Caco-2 (cell line): ENCODE measurements at regions of chr11 and their contacts with region 1.

Region 1: DNA sequence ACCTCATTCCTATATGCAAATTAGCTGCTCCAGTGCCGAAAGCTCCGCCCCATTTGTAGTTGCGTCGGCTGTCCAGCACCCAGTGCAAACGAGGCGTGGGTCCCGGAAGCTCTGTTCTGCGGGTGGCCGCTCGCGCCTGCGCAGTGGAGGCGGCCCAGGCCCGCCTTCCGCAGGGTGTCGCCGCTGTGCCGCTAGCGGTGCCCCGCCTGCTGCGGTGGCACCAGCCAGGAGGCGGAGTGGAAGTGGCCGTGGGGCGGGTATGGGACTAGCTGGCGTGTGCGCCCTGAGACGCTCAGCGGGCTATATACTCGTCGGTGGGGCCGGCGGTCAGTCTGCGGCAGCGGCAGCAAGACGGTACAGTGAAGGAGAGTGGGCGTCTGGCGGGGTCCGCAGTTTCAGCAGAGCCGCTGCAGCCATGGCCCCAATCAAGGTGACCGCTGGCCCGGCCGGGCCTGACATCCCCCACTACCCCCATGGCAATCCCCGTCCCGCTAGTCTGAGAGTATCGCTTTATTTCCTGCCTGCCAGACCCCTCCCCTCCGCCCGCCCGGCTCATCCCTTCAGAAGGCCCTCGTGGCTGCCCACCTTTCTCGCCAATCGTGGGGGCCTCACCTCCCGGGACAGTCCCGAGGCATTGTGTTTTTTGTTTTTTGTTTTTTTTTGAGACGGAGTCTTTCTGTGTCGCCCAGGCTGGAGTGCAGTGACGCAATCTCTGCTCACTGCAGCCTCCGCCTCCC is at the start of gene PRDX5:
- DNase-seq: peak; percentile 98
- H3K4me3 ChIP-seq: peak within 1 kb of the TSS; percentile 70
- H3K4me3 Mint-ChIP-seq: peak within 1 kb of the TSS; percentile 84
- H3K27ac Mint-ChIP-seq: peak within 1 kb of the TSS; percentile 97
- H3K4me1 ChIP-seq: peaks cover 21% of the 10 kb centered on the region
- H3K4me1 Mint-ChIP-seq: peaks cover 28% of the 10 kb centered on the region
- H3K27me3 ChIP-seq: no peaks in the 10 kb centered on the region
- H3K27me3 Mint-ChIP-seq: no peaks in the 10 kb centered on the region
- CTCF ChIP-seq: peak in 1 of 2 experiments; percentile 56
- total RNA-seq, gene PRDX5: 269 and 306 TPM in 2 replicates

Region 2: GRCh38 chr11:64269380-64270234 is 48.5 kb before region 1 on chr11:
- CTCF ChIA-PET with region 1: interaction called, 34 read pairs
- POLR2A ChIA-PET with region 1: interaction called, 9 read pairs
- intact Hi-C with region 1: no loop called
- DNase-seq: peak; percentile 99
- H3K4me3 ChIP-seq: peak overlapping the region; percentile 85
- H3K4me3 Mint-ChIP-seq: peak overlapping the region; percentile 89
- H3K27ac Mint-ChIP-seq: peak overlapping the region; percentile 95
- H3K4me1 ChIP-seq: peaks cover 21% of the 10 kb centered on the region
- H3K4me1 Mint-ChIP-seq: peaks cover 17% of the 10 kb centered on the region
- H3K27me3 ChIP-seq: no peaks in the 10 kb centered on the region
- H3K27me3 Mint-ChIP-seq: no peaks in the 10 kb centered on the region
- CTCF ChIP-seq: no peak

Region 3: DNA sequence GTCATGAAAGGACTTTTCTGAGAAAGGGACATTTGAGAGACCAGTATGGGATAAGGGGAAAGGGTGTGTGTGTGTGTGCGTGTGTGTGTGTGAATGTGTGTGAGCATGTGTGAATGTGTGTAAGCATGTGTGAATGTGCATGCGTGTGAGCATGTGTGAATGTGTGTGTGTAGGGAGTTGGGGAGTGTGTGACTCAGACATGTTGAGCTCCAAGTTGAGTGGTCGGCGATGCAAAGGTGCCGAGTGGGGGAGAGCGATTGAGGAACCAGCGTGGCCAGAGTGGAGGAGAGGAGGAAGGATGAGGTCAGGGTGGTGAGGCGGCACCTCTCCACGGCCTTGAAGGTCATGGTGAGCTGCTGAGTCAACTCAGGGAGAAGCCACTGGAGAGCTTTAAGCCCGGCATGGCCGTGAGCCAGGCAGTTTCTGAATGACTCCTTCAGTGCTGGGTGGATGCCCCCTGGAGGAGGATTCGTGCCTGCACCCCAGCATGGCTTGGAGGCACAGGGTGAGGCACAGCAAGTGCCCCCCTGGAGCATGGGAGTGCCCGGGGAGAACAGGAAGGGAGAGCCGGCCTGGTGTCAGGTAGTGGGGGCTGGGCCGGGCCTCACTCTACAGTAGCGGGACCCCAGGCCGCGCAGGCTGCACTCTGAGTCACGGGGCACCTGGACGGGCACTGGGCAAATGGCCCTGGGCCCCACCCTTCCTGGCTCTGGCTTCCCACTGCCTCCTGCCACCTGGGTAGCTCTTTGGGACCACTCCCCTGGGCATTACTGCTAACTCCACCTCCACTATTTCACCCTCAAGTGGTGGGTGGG is 13.6 kb after region 1 on chr11:
- CTCF ChIA-PET with region 1: interaction called, 24 read pairs
- POLR2A ChIA-PET with region 1: interaction called, 13 read pairs
- intact Hi-C with region 1: loop called (anchors 1 kb)
- DNase-seq: peak; percentile 42 to 55
- H3K4me3 ChIP-seq: no peak overlapping the region
- H3K4me3 Mint-ChIP-seq: no peak overlapping the region
- H3K27ac Mint-ChIP-seq: no peak overlapping the region
- H3K4me1 ChIP-seq: peaks cover 5% of the 10 kb centered on the region; the same call in 1 of the 2 replicates
- H3K4me1 Mint-ChIP-seq: peaks cover 12% of the 10 kb centered on the region
- H3K27me3 ChIP-seq: no peaks in the 10 kb centered on the region
- H3K27me3 Mint-ChIP-seq: no peaks in the 10 kb centered on the region
- CTCF ChIP-seq: peak; percentile 17 to 20

Region 4: DNA sequence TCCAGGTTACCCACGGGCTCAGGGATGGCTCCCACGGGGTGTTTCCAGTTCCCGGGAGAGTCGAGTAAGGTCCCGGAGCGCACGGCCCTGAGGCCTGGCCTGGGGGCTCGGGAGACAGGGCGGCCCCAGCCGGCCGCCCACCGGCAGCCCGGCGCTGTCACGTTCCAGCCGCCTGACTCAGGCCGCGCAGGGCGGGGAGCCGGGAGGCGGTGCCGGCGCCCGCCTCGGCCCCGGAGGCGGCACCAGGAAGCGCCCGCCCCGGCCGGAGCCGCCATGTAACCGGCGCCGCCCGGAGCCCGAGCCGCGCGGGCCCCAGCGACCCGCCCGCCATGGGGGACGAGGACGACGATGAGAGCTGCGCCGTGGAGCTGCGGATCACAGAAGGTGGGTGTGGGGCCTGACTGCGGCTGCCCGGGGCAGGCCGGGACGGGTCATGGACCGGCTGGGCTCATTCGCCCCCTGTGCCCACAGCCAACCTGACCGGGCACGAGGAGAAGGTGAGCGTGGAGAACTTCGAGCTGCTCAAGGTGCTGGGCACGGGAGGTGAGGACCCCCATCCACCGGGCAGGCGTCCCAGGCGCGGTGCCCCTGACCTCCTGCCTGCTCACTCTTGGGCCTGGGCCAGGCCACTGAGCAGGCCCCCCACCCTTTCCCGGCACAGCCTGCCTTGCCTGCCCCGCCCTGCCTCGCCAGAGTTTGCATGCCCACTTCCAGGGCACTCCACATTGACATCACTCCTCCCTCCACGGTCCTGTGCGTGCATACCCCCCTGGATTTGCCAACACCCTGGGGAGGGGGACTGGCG is 41.0 kb after region 1 on chr11 and contains the start of gene RPS6KA4:
- CTCF ChIA-PET with region 1: interaction called, 274 read pairs
- POLR2A ChIA-PET with region 1: interaction called, 43 read pairs
- intact Hi-C with region 1: loop called (anchors 1 kb)
- DNase-seq: peak; percentile 65 to 82
- H3K4me3 ChIP-seq: peak within 1 kb of the TSS; percentile 99
- H3K4me3 Mint-ChIP-seq: peak within 1 kb of the TSS; percentile 99
- H3K27ac Mint-ChIP-seq: peak within 1 kb of the TSS; percentile 86
- H3K4me1 ChIP-seq: peaks cover 46% of the 10 kb centered on the region
- H3K4me1 Mint-ChIP-seq: peaks cover 29% of the 10 kb centered on the region
- H3K27me3 ChIP-seq: no peaks in the 10 kb centered on the region
- H3K27me3 Mint-ChIP-seq: no peaks in the 10 kb centered on the region
- CTCF ChIP-seq: no peak
- total RNA-seq, gene RPS6KA4: 95.7 and 98.6 TPM in 2 replicates

Region 5: DNA sequence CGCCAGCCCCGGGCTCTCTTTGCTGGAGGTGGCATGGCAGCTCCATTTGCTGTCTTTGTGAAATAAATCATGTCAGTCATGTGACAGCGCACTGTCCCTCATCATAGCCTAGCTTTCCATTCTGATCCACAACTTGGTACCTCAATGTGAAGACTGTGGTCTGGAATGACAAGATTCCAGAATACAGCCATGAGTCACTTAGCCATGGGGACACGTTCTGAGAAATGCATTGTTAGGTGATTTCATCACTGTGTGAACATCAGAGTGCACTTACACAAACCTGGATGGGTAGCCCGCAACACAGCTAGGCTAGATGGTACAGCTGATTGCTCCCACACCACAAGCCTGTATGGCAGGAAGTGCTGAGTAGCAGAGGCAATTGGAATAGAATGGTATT is 68.2 kb after region 1 on chr11:
- CTCF ChIA-PET with region 1: interaction called, 12 read pairs
- POLR2A ChIA-PET with region 1: interaction called, 6 read pairs
- intact Hi-C with region 1: no loop called
- DNase-seq: peak; percentile 71
- H3K4me3 ChIP-seq: no peak overlapping the region
- H3K4me3 Mint-ChIP-seq: no peak overlapping the region
- H3K27ac Mint-ChIP-seq: peak overlapping the region; percentile 85
- H3K4me1 ChIP-seq: peaks cover 52% of the 10 kb centered on the region
- H3K4me1 Mint-ChIP-seq: peaks cover 41% of the 10 kb centered on the region
- H3K27me3 ChIP-seq: no peaks in the 10 kb centered on the region
- H3K27me3 Mint-ChIP-seq: no peaks in the 10 kb centered on the region
- CTCF ChIP-seq: no peak

Region 6: GRCh38 chr11:64448599-64449556 is 130.8 kb after region 1 on chr11:
- CTCF ChIA-PET with region 1: interaction called, 17 read pairs
- POLR2A ChIA-PET with region 1: interaction called, 5 read pairs
- intact Hi-C with region 1: loop called (anchors 2 kb)
- DNase-seq: peak; percentile 90 to 92
- H3K4me3 ChIP-seq: peak overlapping the region; percentile 53
- H3K4me3 Mint-ChIP-seq: peak overlapping the region; percentile 89
- H3K27ac Mint-ChIP-seq: peak overlapping the region; percentile 67
- H3K4me1 ChIP-seq: peaks cover 17% of the 10 kb centered on the region
- H3K4me1 Mint-ChIP-seq: peaks cover 20% of the 10 kb centered on the region
- H3K27me3 ChIP-seq: no peaks in the 10 kb centered on the region; the same call in 1 of the 2 replicates
- H3K27me3 Mint-ChIP-seq: no peaks in the 10 kb centered on the region
- CTCF ChIP-seq: peak; percentile 88 to 97

Region 7: GRCh38 chr11:64523456-64524151 is 205.5 kb after region 1 on chr11:
- CTCF ChIA-PET with region 1: no interaction called
- POLR2A ChIA-PET with region 1: no interaction called
- intact Hi-C with region 1: no loop called
- DNase-seq: peak in 1 of 2 experiments; percentile 3
- H3K4me3 ChIP-seq: no peak overlapping the region
- H3K4me3 Mint-ChIP-seq: no peak overlapping the region
- H3K27ac Mint-ChIP-seq: no peak overlapping the region
- H3K4me1 ChIP-seq: peaks cover 8% of the 10 kb centered on the region; the same call in 1 of the 2 replicates
- H3K4me1 Mint-ChIP-seq: no peaks in the 10 kb centered on the region
- H3K27me3 ChIP-seq: no peaks in the 10 kb centered on the region
- H3K27me3 Mint-ChIP-seq: peaks cover 10% of the 10 kb centered on the region
- CTCF ChIP-seq: no peak

Region 8: DNA sequence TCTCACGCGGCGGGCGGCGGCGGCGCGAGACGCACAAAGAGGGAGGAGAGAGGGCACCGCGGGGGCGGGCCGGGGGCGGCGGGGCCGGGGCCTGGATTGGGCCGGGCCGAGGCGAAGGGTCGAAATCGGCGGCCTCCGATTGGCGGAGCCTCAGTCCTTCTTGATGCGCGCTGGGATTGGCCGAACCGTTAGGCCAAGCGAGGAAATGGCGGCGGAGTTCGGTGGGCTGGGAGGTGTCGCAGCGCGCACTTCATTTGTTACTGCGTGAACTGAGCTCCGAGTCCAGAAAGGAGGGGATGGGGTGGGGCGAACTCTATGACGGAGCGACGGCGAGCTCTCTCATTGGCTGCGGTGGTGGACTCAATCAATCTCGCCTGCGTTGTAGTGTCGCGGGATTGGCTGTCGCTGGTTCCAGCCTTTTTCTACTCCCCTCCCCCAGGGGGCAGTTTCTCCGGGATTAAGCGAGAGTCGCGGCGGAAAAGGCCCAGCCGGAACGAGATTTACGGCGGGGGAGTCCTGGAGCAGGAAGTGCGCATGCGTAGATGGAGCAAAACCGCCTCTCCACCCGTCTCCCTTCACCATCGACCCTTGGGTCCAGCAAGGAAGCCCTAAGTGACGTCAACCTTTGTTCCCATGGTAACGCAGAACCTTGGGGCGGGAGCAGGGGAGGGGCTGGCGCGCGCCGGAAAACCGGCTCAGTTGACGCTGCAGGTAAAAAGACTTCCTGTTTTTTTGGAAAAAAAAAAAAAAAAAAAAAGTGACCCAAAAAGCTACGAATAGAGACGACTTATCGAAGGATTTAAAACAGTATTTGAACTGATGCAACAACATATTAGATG is 460.6 kb after region 1 on chr11 and contains the start of gene SF1:
- CTCF ChIA-PET with region 1: interaction called, 3 read pairs
- POLR2A ChIA-PET with region 1: interaction called, 13 read pairs
- intact Hi-C with region 1: no loop called
- DNase-seq: peak; percentile 100
- H3K4me3 ChIP-seq: peak within 1 kb of the TSS; percentile 99
- H3K4me3 Mint-ChIP-seq: peak within 1 kb of the TSS; percentile 91
- H3K27ac Mint-ChIP-seq: peak within 1 kb of the TSS; percentile 99
- H3K4me1 ChIP-seq: peaks cover 17% of the 10 kb centered on the region
- H3K4me1 Mint-ChIP-seq: peaks cover 7% of the 10 kb centered on the region
- H3K27me3 ChIP-seq: no peaks in the 10 kb centered on the region
- H3K27me3 Mint-ChIP-seq: no peaks in the 10 kb centered on the region
- CTCF ChIP-seq: no peak
- total RNA-seq, gene SF1: 359 and 386 TPM in 2 replicates